Ovary (tissue), 10 donors: ENCODE measurements at regions of chr11 and their contacts with region 1.

Region 1: GRCh38 chr11:75814686-75815344 is at the start of gene UVRAG:
- DNase-seq: peak; percentile 98 to 99 (median 99)
- H3K4me3 ChIP-seq: peak within 1 kb of the TSS; percentile 66
- H3K27ac ChIP-seq: peak within 1 kb of the TSS; percentile 67 to 77
- H3K4me1 ChIP-seq: peaks cover 16% of the 10 kb centered on the region
- H3K27me3 ChIP-seq: no peaks in the 10 kb centered on the region
- CTCF ChIP-seq: peak in 2 of 3 donors; percentile 13 to 33
- EP300 ChIP-seq: peak; percentile 25
- POLR2A ChIP-seq: peak; percentile 71
- total RNA-seq, gene UVRAG: 17.3 to 26.7 (median 22.4) TPM

Region 2: DNA sequence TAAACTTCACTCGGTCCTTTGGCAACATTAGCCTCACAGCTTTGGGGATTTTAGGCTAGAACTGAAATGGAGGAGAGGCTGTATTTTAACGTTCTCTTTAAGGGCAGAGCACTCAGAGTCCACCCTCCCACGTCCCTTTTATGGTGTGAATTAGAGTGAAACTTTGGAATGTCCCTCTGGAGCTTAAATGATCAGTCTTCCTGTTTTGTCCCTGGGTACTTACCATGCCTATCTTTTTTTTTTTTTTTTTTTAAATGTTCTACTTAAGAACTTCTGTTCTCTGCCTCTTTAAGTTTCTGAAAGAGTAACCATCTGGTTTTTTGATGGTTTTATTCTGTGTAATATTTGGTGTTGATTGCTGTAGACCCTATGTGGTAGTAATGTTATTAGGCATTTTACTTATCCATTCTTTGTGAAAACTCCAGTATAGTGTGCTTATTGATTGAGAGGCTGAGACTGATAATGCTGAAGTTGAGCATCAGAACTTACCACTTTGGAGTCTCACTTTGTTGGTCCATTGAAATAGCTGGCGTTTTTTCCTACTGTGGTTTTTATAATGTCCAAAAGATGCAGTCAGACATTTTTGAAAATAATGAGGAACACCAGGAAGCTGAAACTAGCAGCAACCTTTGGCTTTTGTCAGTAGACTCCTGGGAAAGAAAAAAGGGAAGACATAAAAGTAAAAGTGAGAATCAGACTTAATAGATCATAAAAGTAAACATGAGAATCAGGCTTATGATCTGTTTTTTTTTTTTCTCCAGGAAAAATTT is 11.8 kb after region 1 on chr11:
- intact Hi-C with region 1: no loop called
- DNase-seq: no peak
- H3K4me3 ChIP-seq: no peak overlapping the region
- H3K27ac ChIP-seq: no peak overlapping the region
- H3K4me1 ChIP-seq: peaks cover 11% of the 10 kb centered on the region
- H3K27me3 ChIP-seq: no peaks in the 10 kb centered on the region
- CTCF ChIP-seq: no peak
- EP300 ChIP-seq: no peak
- POLR2A ChIP-seq: no peak

Region 3: GRCh38 chr11:75855191-75855590 is 40.4 kb after region 1 on chr11:
- intact Hi-C with region 1: loop called in 1 of 4 experiments (anchors 1 kb)
- DNase-seq: no peak
- H3K4me3 ChIP-seq: no peak overlapping the region
- H3K27ac ChIP-seq: no peak overlapping the region
- H3K4me1 ChIP-seq: peaks cover 4% of the 10 kb centered on the region
- H3K27me3 ChIP-seq: no peaks in the 10 kb centered on the region
- CTCF ChIP-seq: no peak
- EP300 ChIP-seq: no peak
- POLR2A ChIP-seq: no peak

Region 4: GRCh38 chr11:75879737-75880136 is 64.9 kb after region 1 on chr11:
- intact Hi-C with region 1: no loop called
- DNase-seq: no peak
- H3K4me3 ChIP-seq: no peak overlapping the region
- H3K27ac ChIP-seq: no peak overlapping the region
- H3K4me1 ChIP-seq: peaks cover 1% of the 10 kb centered on the region
- H3K27me3 ChIP-seq: no peaks in the 10 kb centered on the region
- CTCF ChIP-seq: no peak
- EP300 ChIP-seq: no peak
- POLR2A ChIP-seq: no peak